Naive thymus-derived CD4-positive, alpha-beta T cell (primary cell): ENCODE measurements at regions of chr9 and their contacts with region 1.

Region 1: DNA sequence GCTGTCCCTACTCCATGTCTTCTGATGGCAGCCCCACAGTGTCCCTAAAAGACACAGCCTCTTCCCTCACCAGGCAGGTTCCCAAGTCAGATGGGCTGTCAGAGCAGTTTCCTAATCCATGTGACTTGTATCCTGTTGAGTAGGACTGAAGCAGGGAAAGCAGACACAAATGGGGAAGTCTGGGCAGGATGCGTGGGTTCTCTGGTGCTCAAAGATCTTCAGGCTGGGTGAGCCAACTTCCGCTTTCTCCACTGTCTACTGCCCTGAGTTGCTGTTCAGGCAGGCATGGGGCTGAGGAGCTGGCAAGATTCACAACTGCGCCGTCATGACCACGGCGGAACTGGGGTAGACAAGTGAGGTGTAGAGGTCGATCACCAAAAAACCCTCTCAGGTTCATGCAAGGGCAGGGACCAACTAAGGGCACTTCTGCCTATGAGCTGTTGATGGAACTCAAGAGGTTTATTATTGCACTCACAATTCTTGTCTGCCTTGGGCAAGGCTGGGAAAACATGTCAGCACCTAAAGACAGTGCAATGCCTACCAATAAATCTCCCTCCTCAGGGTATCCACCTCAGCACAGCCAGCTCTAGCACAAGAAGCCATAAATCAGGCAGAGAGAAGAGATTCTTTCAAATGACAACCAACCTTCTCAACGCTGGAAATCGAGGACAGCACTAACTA is 83.4 kb downstream of the RAPGEF1 start:
- DNase-seq: peak in 8 of 9 donors; percentile 40 to 70 (median 50)
- ATAC-seq: peak; percentile 93
- H3K4me3 ChIP-seq: no peak overlapping the region
- H3K4me3 Mint-ChIP-seq: peak overlapping the region; percentile 18 to 69 (median 61)
- H3K27ac ChIP-seq: peak overlapping the region; percentile 49
- H3K27ac Mint-ChIP-seq: peak overlapping the region; percentile 77 to 94 (median 88)
- H3K4me1 ChIP-seq: peaks cover 20 to 28% of the 10 kb centered on the region in 2 donors
- H3K4me1 Mint-ChIP-seq: peaks cover 56 to 88% (median 72%) of the 10 kb centered on the region in 7 donors
- H3K27me3 ChIP-seq: no peaks in the 10 kb centered on the region
- H3K27me3 Mint-ChIP-seq: no peaks in the 10 kb centered on the region

Region 2: DNA sequence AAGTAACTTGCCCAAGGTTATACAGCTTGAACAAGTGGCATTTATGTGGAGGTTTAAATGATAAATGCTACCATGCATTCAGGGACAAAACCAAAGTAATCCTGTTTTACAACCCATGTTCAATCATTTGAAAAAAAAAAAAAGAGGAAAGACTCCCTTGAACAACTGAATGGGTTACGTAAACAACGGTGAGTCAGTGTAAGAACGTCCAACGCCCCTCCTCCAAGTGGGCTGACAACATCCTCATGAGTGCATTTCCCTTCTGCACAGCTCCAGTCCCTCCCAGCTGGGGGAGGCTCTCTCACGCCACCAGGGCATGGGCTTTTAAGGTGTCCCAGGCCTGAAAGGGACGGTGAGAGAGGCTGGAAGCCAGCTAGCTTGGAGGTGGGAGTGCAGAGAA is 21.2 kb before region 1 on chr9:
- CTCF ChIA-PET with region 1: no interaction called
- POLR2A ChIA-PET with region 1: interaction called, 3 read pairs
- intact Hi-C with region 1: loop called in 1 of 2 experiments (anchors 2 kb)
- DNase-seq: peak; percentile 34 to 76 (median 60)
- ATAC-seq: peak; percentile 98
- H3K4me3 ChIP-seq: no peak overlapping the region
- H3K4me3 Mint-ChIP-seq: peak overlapping the region in 3 of 10 donors; percentile 5 to 50 (median 11)
- H3K27ac ChIP-seq: peak overlapping the region; percentile 36
- H3K27ac Mint-ChIP-seq: peak overlapping the region; percentile 70 to 89 (median 85)
- H3K4me1 ChIP-seq: peaks cover 12 to 20% of the 10 kb centered on the region in 2 donors
- H3K4me1 Mint-ChIP-seq: peaks cover 15 to 51% (median 19%) of the 10 kb centered on the region in 7 donors
- H3K27me3 ChIP-seq: no peaks in the 10 kb centered on the region
- H3K27me3 Mint-ChIP-seq: no peaks in the 10 kb centered on the region